Calu3 (cell line): ENCODE measurements at regions of chr9 and their contacts with region 1.

Region 1: GRCh38 chr9:124894741-124895170 is 32.8 kb downstream of the ARPC5L start:
- DNase-seq: no peak
- H3K4me3 Mint-ChIP-seq: no peak overlapping the region
- H3K27ac Mint-ChIP-seq: no peak overlapping the region
- H3K4me1 Mint-ChIP-seq: peaks cover 6% of the 10 kb centered on the region
- H3K27me3 Mint-ChIP-seq: no peaks in the 10 kb centered on the region
- CTCF ChIP-seq: no peak

Region 2: DNA sequence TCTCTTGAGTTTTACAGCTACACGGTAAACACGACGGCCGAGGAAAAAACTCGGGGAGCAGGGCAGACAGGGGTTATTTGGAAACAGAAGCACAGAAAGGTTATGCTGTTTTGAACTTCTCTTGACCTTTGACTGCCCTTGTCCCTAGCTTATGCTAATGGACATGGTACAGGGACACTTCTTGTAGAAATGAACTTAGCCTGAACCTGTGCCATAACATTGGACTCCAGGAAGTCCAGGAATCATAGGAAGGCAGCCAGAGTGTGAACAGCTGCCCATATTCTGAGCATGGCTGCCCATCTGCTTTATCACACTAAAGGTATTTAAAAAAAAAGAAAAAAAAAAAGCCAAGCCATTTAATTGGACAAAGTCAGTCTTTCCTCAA is 169.7 kb before region 1 on chr9:
- CTCF ChIA-PET with region 1: no interaction called
- intact Hi-C with region 1: no loop called
- DNase-seq: no peak
- H3K4me3 Mint-ChIP-seq: no peak overlapping the region
- H3K27ac Mint-ChIP-seq: no peak overlapping the region
- H3K4me1 Mint-ChIP-seq: no peaks in the 10 kb centered on the region
- H3K27me3 Mint-ChIP-seq: no peaks in the 10 kb centered on the region
- CTCF ChIP-seq: no peak

Region 3: GRCh38 chr9:124852829-124853531 is 41.8 kb before region 1 on chr9 and contains the start of gene WDR38:
- CTCF ChIA-PET with region 1: no interaction called
- intact Hi-C with region 1: no loop called
- DNase-seq: peak; percentile 70
- H3K4me3 Mint-ChIP-seq: peak within 1 kb of the TSS; percentile 66
- H3K27ac Mint-ChIP-seq: peak within 1 kb of the TSS; percentile 27
- H3K4me1 Mint-ChIP-seq: no peaks in the 10 kb centered on the region
- H3K27me3 Mint-ChIP-seq: no peaks in the 10 kb centered on the region
- CTCF ChIP-seq: peak; percentile 92
- total RNA-seq, gene WDR38: not detected in 2 replicates

Region 4: DNA sequence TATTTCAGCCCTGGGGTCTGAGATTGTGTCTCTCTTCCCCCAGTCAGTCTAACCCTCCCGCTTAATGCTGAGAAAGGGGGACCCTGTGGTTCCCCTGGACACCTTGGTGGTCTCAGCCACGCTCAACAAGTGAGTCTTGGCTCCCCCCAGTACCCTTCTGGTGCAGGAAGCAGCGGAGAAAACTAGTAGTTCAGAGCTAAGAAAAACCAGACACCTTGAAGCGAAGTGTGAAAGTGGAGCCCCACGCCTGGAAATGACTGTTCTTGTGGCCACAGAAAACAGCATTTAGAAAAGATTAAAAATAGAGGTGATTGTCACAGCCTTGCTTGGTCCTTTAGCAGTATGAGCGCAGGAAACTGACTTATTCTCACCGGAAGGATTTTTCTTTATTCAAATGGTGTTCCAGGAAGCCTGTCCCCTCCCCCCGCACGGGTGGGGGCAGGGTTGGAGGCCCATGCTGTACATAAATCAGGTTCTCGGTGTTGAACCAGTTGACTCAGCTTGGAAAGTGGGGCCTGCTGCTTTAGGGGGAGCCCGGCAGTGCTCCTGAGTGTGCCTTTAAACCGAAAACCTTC is 24.7 kb before region 1 on chr9:
- CTCF ChIA-PET with region 1: no interaction called
- intact Hi-C with region 1: loop called (anchors 1 kb)
- DNase-seq: no peak
- H3K4me3 Mint-ChIP-seq: peak overlapping the region; percentile 90
- H3K27ac Mint-ChIP-seq: no peak overlapping the region
- H3K4me1 Mint-ChIP-seq: peaks cover 17% of the 10 kb centered on the region
- H3K27me3 Mint-ChIP-seq: no peaks in the 10 kb centered on the region
- CTCF ChIP-seq: no peak